Right ventricle myocardium inferior (tissue), 1 donor: ENCODE measurements at regions of chr9 and their contacts with region 1.

Region 1: DNA sequence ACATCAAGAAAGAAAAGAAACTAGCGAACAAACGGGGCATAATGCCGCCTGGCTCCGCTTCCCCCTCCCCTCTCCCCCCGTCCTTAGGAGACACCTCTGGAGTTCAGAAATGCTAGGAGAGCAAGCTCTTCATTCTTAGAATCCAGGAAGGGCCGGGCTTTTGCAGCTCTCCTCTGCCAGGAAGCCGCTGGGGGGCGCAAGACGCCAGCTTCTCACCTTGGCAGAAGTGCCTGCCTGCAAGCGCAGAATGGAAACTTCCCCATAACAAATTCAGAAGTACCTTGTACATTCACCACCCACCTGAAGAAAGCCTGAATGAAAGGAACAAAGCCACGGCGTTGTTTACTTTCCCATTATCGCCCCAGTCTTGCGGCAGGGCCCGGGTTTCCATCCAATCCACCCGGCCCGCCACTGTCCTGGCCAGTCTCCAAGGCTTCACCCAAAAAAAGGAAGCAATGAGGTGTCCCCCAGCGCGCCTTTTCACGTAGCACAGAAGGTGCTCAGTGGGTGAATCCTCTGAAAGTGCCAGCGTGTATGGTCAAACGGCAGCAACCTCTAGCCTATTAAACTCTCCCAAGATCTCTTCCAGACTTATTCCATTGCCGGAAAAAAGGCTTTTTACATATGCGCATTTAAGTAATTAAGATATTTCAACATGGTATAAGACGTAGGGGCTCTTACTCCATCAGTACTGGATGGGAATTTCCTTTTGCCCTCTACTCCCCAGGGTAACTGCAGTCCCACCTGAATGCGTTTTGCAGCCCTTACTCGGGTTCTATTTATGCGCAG is 1.6 kb upstream of the GADD45G start:
- DNase-seq: peak; percentile 95
- ATAC-seq: peak; percentile 26

Region 2: GRCh38 chr9:89684901-89685636 is 81.9 kb after region 1 on chr9:
- intact Hi-C with region 1: loop called (anchors 1 kb)
- DNase-seq: peak; percentile 82
- ATAC-seq: peak; percentile 90

Region 3: GRCh38 chr9:89755821-89756220 is 152.6 kb after region 1 on chr9:
- intact Hi-C with region 1: loop called (anchors 5 kb)
- DNase-seq: no peak
- ATAC-seq: peak; percentile 45

Region 4: GRCh38 chr9:89878687-89879086 is 275.5 kb after region 1 on chr9:
- intact Hi-C with region 1: loop called (anchors 2 kb)
- DNase-seq: peak; percentile 81
- ATAC-seq: peak; percentile 86

Region 5: DNA sequence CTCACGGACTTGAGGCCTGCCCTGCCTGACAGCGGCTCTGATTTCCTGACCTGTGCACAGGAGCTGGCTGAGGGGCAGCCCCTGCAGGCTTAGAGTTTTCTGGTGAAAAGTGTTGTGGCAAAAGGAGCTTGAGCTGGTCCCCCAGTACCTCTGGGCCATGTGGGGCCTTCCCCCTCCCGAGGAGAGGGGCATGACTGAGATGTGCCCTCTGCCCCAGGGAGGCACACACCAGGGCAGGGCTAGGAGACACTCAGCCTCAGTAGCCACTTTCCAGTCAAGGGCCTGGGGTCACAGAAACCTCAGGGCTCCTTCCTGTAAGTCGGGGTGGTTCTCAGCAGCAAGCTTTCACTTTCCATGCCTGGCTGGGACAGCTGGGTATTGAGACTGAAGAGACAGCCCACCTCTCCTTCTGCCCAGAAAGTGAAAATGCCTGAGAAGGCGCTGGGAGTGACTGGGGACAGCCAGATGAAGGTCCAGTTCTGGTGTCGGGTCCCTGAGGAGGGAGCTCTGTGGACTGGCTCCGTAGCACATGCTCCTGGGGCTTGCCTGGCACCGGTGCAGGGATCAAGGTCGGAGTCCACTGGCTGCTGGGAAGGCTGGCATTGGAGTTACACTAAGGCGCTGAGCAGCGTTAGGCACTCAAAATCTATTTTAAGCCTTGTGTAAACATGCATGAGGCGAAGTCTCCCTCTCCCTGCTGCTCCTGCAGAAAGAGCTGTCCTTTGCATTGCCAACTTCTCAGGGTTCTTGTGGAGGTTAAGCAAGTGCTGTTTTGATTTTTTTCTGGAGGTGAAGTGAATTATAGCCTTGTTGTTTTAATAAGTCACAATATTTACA is 396.6 kb after region 1 on chr9:
- intact Hi-C with region 1: loop called (anchors 1 kb)
- DNase-seq: peak; percentile 80
- ATAC-seq: peak; percentile 88